ENCODE measurements at regions of chr20 and their contacts with region 1.

Region 1: DNA sequence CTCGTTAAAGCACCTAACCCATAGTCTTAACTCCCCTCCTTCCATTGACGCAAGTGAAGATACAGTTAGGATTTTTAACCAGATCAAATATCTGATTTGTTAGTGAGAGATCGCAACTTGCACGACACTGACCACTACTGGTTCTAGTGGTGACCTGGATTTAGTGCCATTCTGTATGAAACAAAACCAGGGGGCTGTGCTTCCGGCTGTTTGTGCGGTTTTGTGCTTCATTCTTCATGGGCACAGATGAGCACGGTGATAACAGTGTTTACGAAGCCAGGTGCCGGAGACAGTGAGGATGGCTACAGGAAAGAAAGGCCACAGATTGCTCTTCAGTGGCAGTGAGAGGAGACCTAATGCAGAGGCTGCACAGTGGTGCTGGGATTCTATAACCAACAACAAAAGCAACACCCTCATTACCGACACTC is 75.5 kb downstream of the NOL4L start:
- DNase-seq: peak; percentile 85
- ATAC-seq: peak; percentile 95
- H3K4me3 ChIP-seq: no peak overlapping the region
- H3K27ac ChIP-seq: peak overlapping the region; percentile 20
- H3K4me1 ChIP-seq: peaks cover 15% of the 10 kb centered on the region
- H3K27me3 ChIP-seq: no peaks in the 10 kb centered on the region
- CTCF ChIP-seq: peak; percentile 75

Region 2: DNA sequence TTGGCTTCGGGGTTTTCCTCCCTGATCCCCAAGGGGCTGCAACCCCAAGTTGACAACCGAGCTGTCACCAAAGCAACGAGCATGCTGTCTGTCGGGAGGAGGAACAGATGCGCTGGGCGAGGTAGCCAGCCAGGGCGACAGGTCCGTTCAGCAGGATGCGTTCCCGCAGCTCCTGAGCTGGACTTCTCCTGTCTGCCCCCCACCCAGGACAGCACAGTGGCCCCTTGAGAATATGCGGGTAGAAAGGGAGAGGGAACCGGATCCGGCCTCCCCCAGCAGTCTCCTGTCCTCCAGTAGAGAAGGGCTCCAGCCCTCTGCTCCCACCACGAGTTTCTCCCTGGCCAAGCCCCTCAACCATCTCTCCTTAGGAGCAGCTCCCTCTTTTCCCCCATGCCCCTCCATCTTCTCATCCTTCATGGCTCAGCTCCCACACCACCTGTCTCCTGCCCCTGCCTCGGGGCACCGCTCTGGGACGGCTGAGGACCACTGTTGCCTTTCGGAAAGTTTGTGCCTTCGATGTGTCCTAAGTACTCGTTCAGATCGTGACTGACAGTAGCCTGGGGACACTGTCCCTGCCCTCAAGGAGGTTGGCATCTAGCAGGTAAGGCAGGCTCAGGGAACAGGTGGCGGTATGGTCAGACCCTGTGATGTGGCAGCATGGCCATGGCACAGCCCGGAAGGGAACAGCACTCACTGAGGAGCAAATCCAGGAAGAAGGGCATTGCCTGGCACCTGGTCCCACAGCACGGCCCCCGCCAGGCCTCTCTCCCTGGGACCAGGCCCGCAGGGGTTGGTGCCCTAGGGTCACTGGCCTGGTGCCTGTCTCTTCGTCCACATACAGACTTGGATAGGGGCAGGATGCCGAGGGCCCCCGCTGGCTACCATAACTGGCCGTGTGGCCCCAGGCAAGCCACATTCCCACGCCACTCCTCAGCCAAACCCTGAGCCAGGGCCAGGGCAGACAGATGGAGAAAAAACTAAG is 55.2 kb before region 1 on chr20:
- CTCF ChIA-PET with region 1: interaction called, 11 read pairs
- POLR2A ChIA-PET with region 1: no interaction called
- intact Hi-C with region 1: no loop called
- DNase-seq: no peak
- ATAC-seq: no peak
- H3K4me3 ChIP-seq: no peak overlapping the region
- H3K27ac ChIP-seq: no peak overlapping the region
- H3K4me1 ChIP-seq: peaks cover 3% of the 10 kb centered on the region; the same call in 1 of the 2 replicates
- H3K27me3 ChIP-seq: no peaks in the 10 kb centered on the region
- CTCF ChIP-seq: no peak

Region 3: DNA sequence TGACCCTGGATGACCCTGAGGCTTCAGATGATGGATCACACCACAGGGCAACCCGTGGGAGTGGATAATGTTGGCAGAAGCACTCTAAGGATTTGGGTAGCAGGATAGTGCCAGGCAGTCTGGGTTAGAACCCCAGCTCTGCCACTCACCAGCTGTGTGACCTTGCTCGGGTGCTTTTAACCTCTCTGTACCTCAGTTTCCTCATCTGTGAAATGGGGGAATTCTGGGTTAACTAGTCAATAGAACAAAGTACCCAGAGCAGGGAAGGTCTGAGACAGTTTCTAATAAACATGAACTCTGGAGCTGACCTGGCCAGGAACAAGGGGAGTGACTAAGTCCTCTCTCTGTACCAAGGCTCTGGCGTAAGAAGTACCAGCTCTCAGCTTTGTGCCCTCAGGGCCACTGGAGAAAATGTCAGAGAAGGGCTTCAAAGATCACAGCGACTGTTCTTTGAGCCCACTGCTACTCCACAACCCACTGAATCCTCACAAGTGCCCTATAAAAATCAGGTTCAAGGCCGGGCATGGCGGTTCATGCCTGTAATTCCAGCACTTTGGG is 90.2 kb after region 1 on chr20:
- CTCF ChIA-PET with region 1: interaction called, 17 read pairs
- POLR2A ChIA-PET with region 1: no interaction called
- intact Hi-C with region 1: no loop called
- DNase-seq: no peak
- ATAC-seq: no peak
- H3K4me3 ChIP-seq: no peak overlapping the region
- H3K27ac ChIP-seq: no peak overlapping the region
- H3K4me1 ChIP-seq: no peaks in the 10 kb centered on the region
- H3K27me3 ChIP-seq: no peaks in the 10 kb centered on the region
- CTCF ChIP-seq: no peak